Lower leg skin (tissue), 4 donors: ENCODE measurements at regions of chr10 and their contacts with region 1.

Region 1: GRCh38 chr10:72364239-72364777 is 9.6 kb upstream of the DNAJB12 start:
- DNase-seq: peak; percentile 86 to 97
- H3K4me3 ChIP-seq: no peak overlapping the region
- CTCF ChIP-seq: peak in 1 of 3 donors; percentile 83
- POLR2A ChIP-seq: no peak

Region 2: GRCh38 chr10:72389716-72390115 is 25.4 kb after region 1 on chr10:
- intact Hi-C with region 1: no loop called
- DNase-seq: no peak
- H3K4me3 ChIP-seq: no peak overlapping the region
- CTCF ChIP-seq: no peak
- POLR2A ChIP-seq: no peak

Region 3: GRCh38 chr10:72834183-72834825 is 470.0 kb after region 1 on chr10:
- intact Hi-C with region 1: loop called (anchors 5 kb)
- DNase-seq: peak in 1 of 2 donors; percentile 38
- H3K4me3 ChIP-seq: no peak overlapping the region
- CTCF ChIP-seq: no peak
- POLR2A ChIP-seq: no peak

Region 4: DNA sequence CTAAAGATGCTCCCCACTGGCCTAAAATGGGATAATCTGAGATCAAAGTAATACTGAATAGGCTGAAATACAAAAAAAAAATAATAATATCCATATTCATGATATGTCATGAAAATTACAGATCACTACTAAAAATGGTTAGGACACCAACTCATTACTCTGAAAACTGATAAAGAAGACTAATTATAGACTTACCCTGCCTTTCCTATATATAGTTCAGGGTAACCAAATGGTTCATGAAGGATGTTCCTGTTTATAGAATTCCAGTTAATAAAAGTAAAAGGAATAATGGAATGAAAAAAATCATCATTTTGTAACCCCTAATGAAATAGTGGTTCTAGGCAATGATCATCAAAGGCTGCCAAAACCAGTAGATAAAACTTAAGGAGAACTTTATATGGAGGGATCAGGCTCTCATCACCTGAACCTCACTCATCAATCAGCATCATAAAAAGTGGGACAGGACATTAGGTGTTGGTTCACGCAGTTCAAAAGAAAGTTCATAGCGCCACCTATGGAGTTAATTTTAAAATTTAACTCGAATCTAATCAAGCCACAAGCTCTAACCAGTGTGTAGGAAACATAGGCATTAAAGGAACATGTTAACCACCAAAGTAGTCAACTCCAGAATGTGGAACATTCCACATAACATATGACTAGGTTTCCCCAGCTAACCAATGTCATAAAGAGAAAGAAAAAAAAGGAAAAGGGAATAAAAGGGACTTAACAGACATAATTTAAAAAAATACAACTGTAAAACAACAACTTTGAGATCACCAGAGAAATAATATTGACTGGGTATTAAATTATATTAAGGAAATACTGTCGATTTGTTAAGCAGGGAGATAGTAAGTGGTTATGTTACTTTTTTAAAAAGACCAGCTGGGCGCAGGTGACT is 696.7 kb after region 1 on chr10:
- intact Hi-C with region 1: loop called (anchors 10 kb)
- DNase-seq: no peak
- H3K4me3 ChIP-seq: no peak overlapping the region
- CTCF ChIP-seq: no peak
- POLR2A ChIP-seq: no peak